Dorsolateral prefrontal cortex (tissue), 120 donors: ENCODE measurements at regions of chr19 and their contacts with region 1.

Region 1: GRCh38 chr19:57103573-57104277 is 16.1 kb upstream of the USP29 start:
- DNase-seq: peak; percentile 59 to 88 (median 74)
- H3K4me3 ChIP-seq: peak overlapping the region in 58 of 59 donors; percentile 4 to 61 (median 45)
- H3K27ac ChIP-seq: peak overlapping the region in 1 of 59 donors; percentile 22
- H3K27me3 ChIP-seq: peaks cover 0 to 32% (median 18%) of the 10 kb centered on the region in 45 donors
- CTCF ChIP-seq: peak; percentile 68 to 96 (median 90)

Region 2: GRCh38 chr19:56692206-56692895 is 411.4 kb before region 1 on chr19:
- intact Hi-C with region 1: loop called (anchors 1 to 5 kb)
- DNase-seq: peak in 9 of 10 donors; percentile 24 to 91 (median 69)
- H3K4me3 ChIP-seq: peak overlapping the region in 8 of 59 donors; percentile 1 to 22 (median 14)
- H3K27ac ChIP-seq: peak overlapping the region in 19 of 59 donors; percentile 3 to 92 (median 84)
- H3K27me3 ChIP-seq: no peaks in the 10 kb centered on the region
- CTCF ChIP-seq: peak in 14 of 56 donors; percentile 5 to 33 (median 18)

Region 3: DNA sequence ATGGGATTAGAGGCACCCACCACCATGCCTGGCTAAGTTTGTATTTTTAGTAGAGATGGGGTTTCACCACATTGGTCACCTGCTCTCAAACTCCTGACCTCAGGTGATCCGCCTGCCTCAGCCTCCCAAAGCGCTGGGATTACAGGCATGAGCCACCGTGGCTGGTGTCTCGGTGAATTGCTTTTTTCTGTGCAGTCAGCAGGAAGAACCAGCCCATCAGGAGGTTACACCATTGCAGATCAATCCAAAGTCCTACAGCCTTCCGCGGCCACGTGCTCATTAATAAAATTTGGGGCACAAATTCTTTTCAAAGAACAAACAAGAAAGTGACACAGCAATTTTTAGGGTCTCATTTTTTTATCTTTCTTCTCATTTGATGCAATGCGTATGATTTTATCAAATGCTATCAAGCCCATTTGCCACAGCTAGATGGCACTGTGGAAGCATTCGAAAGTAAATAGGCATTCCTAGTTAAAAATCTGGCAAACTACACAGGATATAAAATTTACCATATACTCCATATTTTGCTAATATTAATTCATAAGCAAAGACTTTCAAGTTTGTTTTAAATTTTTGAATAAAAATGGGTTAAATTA is 377.8 kb before region 1 on chr19:
- intact Hi-C with region 1: loop called in 1 of 2 experiments (anchors 5 kb)
- DNase-seq: peak in 1 of 10 donors; percentile 65
- H3K4me3 ChIP-seq: peak overlapping the region in 29 of 59 donors; percentile 2 to 43 (median 20)
- H3K27ac ChIP-seq: peak overlapping the region in 56 of 59 donors; percentile 22 to 92 (median 77)
- H3K27me3 ChIP-seq: no peaks in the 10 kb centered on the region
- CTCF ChIP-seq: peak; percentile 53 to 89 (median 77)

Region 4: GRCh38 chr19:56748378-56748777 is 355.3 kb before region 1 on chr19:
- intact Hi-C with region 1: loop called (anchors 2 to 5 kb)
- DNase-seq: peak in 1 of 10 donors; percentile 70
- H3K4me3 ChIP-seq: peak overlapping the region in 35 of 59 donors; percentile 4 to 52 (median 28)
- H3K27ac ChIP-seq: peak overlapping the region in 53 of 59 donors; percentile 17 to 90 (median 69)
- H3K27me3 ChIP-seq: no peaks in the 10 kb centered on the region
- CTCF ChIP-seq: peak; percentile 61 to 84 (median 77)

Region 5: DNA sequence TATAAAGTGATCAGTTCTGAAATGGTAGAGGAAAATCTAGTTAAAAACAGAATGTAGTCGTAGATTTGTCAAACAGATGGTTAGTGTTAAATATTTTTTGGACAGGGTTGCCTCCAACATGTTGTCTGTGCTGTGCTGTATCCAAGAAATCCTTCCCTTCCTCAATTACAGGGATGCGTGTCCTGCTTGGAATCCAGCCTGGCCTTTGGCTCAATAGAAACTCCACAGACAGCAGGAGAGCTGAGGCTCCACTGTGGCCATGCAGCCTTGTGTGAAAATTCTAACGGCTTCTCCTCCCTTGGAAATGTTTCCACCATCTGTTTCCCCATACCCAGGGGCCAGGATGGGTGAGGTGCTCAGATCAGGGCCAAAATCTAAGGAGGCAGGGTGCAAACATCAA is 51.6 kb before region 1 on chr19:
- intact Hi-C with region 1: no loop called
- DNase-seq: peak in 2 of 10 donors; percentile 6 to 74
- H3K4me3 ChIP-seq: no peak overlapping the region
- H3K27ac ChIP-seq: no peak overlapping the region
- H3K27me3 ChIP-seq: peaks cover 0 to 5% (median 0%) of the 10 kb centered on the region in 45 donors
- CTCF ChIP-seq: no peak

Region 6: GRCh38 chr19:57212109-57212508 is 108.4 kb after region 1 on chr19:
- intact Hi-C with region 1: no loop called
- DNase-seq: no peak
- H3K4me3 ChIP-seq: no peak overlapping the region
- H3K27ac ChIP-seq: peak overlapping the region in 1 of 59 donors; percentile 22
- H3K27me3 ChIP-seq: no peaks in the 10 kb centered on the region
- CTCF ChIP-seq: no peak

Region 7: GRCh38 chr19:57320180-57321084 is 216.7 kb after region 1 on chr19 and contains the start of gene ZNF543:
- intact Hi-C with region 1: no loop called
- DNase-seq: peak; percentile 94 to 98 (median 97)
- H3K4me3 ChIP-seq: peak within 1 kb of the TSS; percentile 66 to 98 (median 93)
- H3K27ac ChIP-seq: peak within 1 kb of the TSS in 57 of 59 donors; percentile 38 to 93 (median 81)
- H3K27me3 ChIP-seq: no peaks in the 10 kb centered on the region
- CTCF ChIP-seq: peak in 13 of 56 donors; percentile 9 to 29 (median 18)
- total RNA-seq, gene ZNF543: 10.1 to 23.0 (median 14.9) TPM